ENCODE measurements at regions of chr3 and their contacts with region 1.

Region 1: GRCh38 chr3:48273594-48274211 is 32.8 kb downstream of the ZNF589 start:
- DNase-seq: peak; percentile 35
- H3K4me3 Mint-ChIP-seq: no peak overlapping the region
- H3K27ac Mint-ChIP-seq: no peak overlapping the region
- H3K4me1 Mint-ChIP-seq: peaks cover 35% of the 10 kb centered on the region
- H3K27me3 Mint-ChIP-seq: no peaks in the 10 kb centered on the region

Region 2: GRCh38 chr3:48232734-48233133 is 41.0 kb before region 1 on chr3:
- intact Hi-C with region 1: loop called (anchors 1 kb)
- DNase-seq: peak; percentile 26
- H3K4me3 Mint-ChIP-seq: no peak overlapping the region
- H3K27ac Mint-ChIP-seq: no peak overlapping the region
- H3K4me1 Mint-ChIP-seq: peaks cover 10% of the 10 kb centered on the region
- H3K27me3 Mint-ChIP-seq: no peaks in the 10 kb centered on the region

Region 3: GRCh38 chr3:48301020-48301796 is 27.5 kb after region 1 on chr3:
- intact Hi-C with region 1: loop called (anchors 1 kb)
- DNase-seq: peak; percentile 87
- H3K4me3 Mint-ChIP-seq: peak within 1 kb of the TSS; percentile 95
- H3K27ac Mint-ChIP-seq: peak within 1 kb of the TSS; percentile 98
- H3K4me1 Mint-ChIP-seq: peaks cover 52% of the 10 kb centered on the region
- H3K27me3 Mint-ChIP-seq: peaks cover 11% of the 10 kb centered on the region

Region 4: GRCh38 chr3:48548729-48549705 is 275.3 kb after region 1 on chr3:
- intact Hi-C with region 1: loop called (anchors 2 kb)
- DNase-seq: peak; percentile 73
- H3K4me3 Mint-ChIP-seq: no peak overlapping the region
- H3K27ac Mint-ChIP-seq: no peak overlapping the region
- H3K4me1 Mint-ChIP-seq: peaks cover 32% of the 10 kb centered on the region
- H3K27me3 Mint-ChIP-seq: no peaks in the 10 kb centered on the region

Region 5: DNA sequence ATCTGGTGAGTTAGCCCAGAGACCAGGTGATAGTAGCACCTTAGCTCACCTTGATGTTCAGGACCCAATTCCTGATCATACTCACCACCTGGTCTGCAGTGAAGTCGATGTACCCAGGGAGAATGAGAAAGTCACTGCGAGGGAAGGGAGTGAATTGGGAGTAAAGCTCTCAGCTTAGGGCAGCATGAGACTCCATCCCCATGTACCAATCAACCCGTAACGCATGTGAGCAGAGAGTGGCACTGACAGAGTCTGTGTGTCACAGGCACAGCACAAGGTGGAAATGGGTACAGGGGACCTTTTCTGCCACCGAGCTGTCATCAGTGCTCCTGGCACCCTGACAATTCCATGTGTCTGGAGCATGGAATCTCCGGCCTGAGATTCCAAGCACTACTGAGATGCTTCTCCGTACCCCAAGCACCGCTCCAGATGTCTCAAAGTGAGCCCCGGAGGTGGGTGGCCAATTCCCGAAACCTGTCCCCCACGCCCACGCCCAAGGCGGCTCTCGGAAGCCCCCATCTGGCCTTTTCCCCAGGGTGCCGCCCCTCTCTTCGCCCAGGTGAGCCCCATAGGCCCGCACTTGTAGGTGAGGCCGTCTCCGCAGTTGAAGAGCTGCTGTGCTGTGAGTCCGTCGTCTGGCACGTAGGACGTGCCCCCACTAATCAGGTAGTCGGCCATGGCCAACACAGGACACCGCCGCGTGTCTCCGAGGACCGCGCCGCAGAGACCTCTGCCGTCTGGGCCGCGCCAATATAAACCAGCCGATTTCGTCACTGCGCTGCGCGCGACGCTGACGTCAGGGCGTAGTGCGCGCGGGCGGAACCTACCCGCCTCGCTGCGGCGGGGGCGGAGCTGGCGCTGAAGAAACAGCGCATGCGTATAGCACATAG is 755.2 kb after region 1 on chr3 and contains the start of gene IMPDH2:
- intact Hi-C with region 1: no loop called
- DNase-seq: peak; percentile 92
- H3K4me3 Mint-ChIP-seq: peak within 1 kb of the TSS; percentile 93
- H3K27ac Mint-ChIP-seq: peak within 1 kb of the TSS; percentile 90
- H3K4me1 Mint-ChIP-seq: peaks cover 50% of the 10 kb centered on the region
- H3K27me3 Mint-ChIP-seq: no peaks in the 10 kb centered on the region
- total RNA-seq, gene IMPDH2: 423 and 434 TPM in 2 replicates

Measured in activated T-helper 1 cell treated with anti-CD3 and anti-CD28 coated beads, Interleukin-12 subunit alpha, Interleukin-12 subunit beta, Interleukin-2, Interleukin-4 antibody, amounts not matched to agents 30 ng/mL and 10 ng/mL and 1 ng/mL, durations not matched to agents 14 hours and 24 hours and 36 hours (primary cell).